ENCODE measurements at regions of chr3 and their contacts with region 1.

Region 1: DNA sequence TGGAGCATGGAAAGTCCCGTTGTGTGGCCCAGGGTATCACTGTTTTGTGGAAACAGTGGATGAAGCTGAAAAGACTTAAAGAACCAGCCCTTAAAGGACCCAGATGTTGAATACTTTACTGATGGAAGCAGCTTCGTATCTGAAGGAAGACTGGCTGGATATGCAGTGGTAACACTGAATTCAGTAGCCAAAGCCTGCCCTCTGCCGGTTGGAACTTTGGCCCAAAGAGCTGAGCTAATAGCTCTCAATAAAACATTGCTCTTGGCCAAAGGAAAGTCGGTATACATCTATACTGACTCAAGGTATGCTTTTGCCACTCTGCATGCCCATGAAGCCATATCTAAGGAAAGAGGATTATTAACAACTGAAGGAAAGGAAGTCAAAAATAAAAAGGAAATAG is 885.4 kb downstream of the PDCD6IP start:
- DNase-seq: peak; percentile 70
- H3K4me3 Mint-ChIP-seq: no peak overlapping the region
- H3K27ac Mint-ChIP-seq: no peak overlapping the region
- H3K4me1 Mint-ChIP-seq: no peaks in the 10 kb centered on the region
- H3K27me3 Mint-ChIP-seq: no peaks in the 10 kb centered on the region
- CTCF ChIP-seq: peak; percentile 61

Region 2: GRCh38 chr3:33980252-33980651 is 703.6 kb before region 1 on chr3:
- CTCF ChIA-PET with region 1: interaction called, 43 read pairs
- POLR2A ChIA-PET with region 1: no interaction called
- intact Hi-C with region 1: loop called (anchors 1 kb)
- DNase-seq: peak; percentile 82
- H3K4me3 Mint-ChIP-seq: no peak overlapping the region
- H3K27ac Mint-ChIP-seq: no peak overlapping the region
- H3K4me1 Mint-ChIP-seq: no peaks in the 10 kb centered on the region
- H3K27me3 Mint-ChIP-seq: peaks cover 40% of the 10 kb centered on the region
- CTCF ChIP-seq: peak; percentile 60

Region 3: GRCh38 chr3:34106879-34107278 is 577.0 kb before region 1 on chr3:
- CTCF ChIA-PET with region 1: no interaction called
- POLR2A ChIA-PET with region 1: no interaction called
- intact Hi-C with region 1: loop called (anchors 10 kb)
- DNase-seq: peak; percentile 47
- H3K4me3 Mint-ChIP-seq: no peak overlapping the region
- H3K27ac Mint-ChIP-seq: no peak overlapping the region
- H3K4me1 Mint-ChIP-seq: no peaks in the 10 kb centered on the region
- H3K27me3 Mint-ChIP-seq: peaks cover 44% of the 10 kb centered on the region
- CTCF ChIP-seq: peak; percentile 29

Region 4: DNA sequence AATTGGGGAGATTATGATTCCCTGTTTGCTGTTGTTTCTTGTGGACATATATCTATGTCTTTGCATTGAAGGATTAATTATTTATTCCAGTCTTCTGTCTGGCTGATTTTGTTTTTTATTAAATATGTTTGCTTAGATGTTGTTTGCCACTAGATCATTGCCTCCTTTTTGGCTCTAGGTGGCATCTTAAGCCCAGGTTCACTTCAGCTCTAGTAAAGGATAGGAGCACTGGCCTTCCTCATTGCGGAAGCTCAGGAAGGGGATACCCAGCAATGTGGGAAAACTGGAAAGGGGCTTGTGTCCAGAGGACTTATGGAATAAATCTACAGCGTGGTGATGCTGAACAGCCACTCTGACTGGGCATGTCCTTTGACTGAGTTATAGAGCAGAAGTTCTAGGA is 63.9 kb before region 1 on chr3:
- CTCF ChIA-PET with region 1: interaction called, 8 read pairs
- POLR2A ChIA-PET with region 1: no interaction called
- intact Hi-C with region 1: loop called (anchors 1 kb)
- DNase-seq: peak; percentile 27
- H3K4me3 Mint-ChIP-seq: no peak overlapping the region
- H3K27ac Mint-ChIP-seq: no peak overlapping the region
- H3K4me1 Mint-ChIP-seq: no peaks in the 10 kb centered on the region
- H3K27me3 Mint-ChIP-seq: peaks cover 68% of the 10 kb centered on the region
- CTCF ChIP-seq: peak; percentile 12

Region 5: DNA sequence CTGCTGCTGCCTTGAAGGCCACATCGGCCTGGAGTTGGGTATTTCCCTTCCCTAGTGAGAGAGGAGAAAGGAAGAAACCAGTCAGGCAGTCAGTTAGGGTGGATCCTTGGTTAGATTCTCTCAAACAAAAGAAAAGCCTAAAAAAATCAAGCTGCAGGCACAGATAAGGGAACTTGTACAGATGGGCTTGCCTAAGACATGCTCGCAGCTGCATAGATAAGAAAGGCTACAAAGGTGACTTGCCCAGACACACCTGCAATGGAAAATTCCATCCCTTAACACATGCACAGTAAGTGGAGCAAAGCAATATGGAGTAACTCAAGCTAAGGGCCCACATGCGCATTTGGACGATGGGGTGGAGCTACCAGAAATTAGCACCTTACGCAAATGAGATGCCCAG is 755.8 kb after region 1 on chr3:
- CTCF ChIA-PET with region 1: no interaction called
- POLR2A ChIA-PET with region 1: no interaction called
- intact Hi-C with region 1: no loop called
- DNase-seq: no peak
- H3K4me3 Mint-ChIP-seq: no peak overlapping the region
- H3K27ac Mint-ChIP-seq: no peak overlapping the region
- H3K4me1 Mint-ChIP-seq: no peaks in the 10 kb centered on the region
- H3K27me3 Mint-ChIP-seq: peaks cover 48% of the 10 kb centered on the region
- CTCF ChIP-seq: no peak

Measured in MCF 10A (cell line).